ENCODE measurements at regions of chr3 and their contacts with region 1.

Region 1: DNA sequence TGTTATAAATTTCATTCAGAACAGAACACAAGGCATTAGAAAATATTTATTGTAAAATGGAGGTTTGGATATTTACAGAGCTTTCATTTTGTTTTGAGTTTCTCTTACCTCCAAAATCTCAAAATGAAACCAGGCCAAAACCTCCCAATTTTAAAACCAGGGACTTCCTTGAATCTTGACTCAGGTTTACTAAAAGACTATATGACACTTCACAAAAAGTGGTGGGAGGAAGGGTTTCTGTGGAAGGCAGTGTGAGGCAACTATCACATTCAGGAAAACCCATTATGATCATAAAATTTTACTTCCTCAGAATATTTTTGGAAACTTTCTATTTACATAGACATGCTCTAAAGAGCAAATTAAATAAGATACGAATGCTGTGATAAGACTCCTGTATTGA is 205.8 kb upstream of the EOMES start:
- DNase-seq: no peak
- H3K4me3 Mint-ChIP-seq: peak overlapping the region; percentile 62
- H3K27ac Mint-ChIP-seq: peak overlapping the region; percentile 82
- H3K4me1 Mint-ChIP-seq: peaks cover 63% of the 10 kb centered on the region
- H3K27me3 Mint-ChIP-seq: no peaks in the 10 kb centered on the region

Region 2: GRCh38 chr3:27752926-27753325 is 175.0 kb before region 1 on chr3:
- intact Hi-C with region 1: loop called (anchors 1 kb)
- DNase-seq: peak; percentile 17
- H3K4me3 Mint-ChIP-seq: peak overlapping the region; percentile 42
- H3K27ac Mint-ChIP-seq: peak overlapping the region; percentile 96
- H3K4me1 Mint-ChIP-seq: peaks cover 35% of the 10 kb centered on the region
- H3K27me3 Mint-ChIP-seq: no peaks in the 10 kb centered on the region

Region 3: DNA sequence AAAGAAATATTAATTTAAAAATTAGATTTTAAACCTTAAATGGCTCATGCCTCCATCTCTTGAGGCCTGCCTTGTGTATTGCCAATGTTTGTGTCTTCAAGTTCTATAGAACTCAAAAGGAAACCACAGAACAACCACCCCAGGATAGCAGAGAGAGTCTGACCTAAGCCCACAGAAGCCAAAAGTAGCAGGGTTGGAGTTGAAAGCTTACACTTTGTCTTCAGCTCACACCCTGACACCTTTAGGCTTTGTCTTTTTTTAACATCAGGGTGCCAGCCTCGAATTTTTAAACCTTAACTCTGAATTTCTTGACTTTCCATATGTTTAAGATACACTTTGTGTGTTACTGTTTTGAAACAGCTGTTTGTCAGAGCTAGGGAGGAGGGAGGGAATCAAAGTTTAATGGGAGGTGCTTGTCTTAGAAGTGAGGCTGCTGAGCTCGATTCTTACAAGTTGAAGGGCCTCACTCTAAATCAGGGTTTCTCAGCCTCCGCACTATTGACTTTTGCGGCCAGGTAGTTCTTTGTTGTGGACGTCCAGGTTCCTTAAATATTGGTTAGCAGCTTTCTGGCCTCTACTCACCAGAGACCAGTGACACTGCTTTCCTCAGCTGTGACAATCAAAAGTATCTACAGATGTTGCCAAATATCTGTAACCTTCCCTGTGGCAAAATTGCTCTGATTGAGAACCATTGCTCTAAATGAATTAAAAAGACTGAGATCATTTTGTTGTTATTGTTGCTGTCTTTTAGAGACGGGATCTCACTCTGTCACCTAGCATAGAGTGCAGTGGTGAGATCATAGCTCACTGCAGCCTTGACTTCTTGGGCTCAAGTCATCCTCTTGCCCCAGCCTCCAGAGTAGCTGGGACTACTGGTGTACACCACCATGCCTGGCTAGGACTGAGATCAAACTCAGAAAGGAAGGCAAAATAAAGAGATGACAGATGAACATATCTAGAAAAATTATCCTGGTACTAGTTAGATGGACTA is 66.5 kb before region 1 on chr3:
- intact Hi-C with region 1: loop called (anchors 2 kb)
- DNase-seq: peak; percentile 42
- H3K4me3 Mint-ChIP-seq: peak overlapping the region; percentile 47
- H3K27ac Mint-ChIP-seq: peak overlapping the region; percentile 87
- H3K4me1 Mint-ChIP-seq: peaks cover 38% of the 10 kb centered on the region
- H3K27me3 Mint-ChIP-seq: no peaks in the 10 kb centered on the region

Region 4: DNA sequence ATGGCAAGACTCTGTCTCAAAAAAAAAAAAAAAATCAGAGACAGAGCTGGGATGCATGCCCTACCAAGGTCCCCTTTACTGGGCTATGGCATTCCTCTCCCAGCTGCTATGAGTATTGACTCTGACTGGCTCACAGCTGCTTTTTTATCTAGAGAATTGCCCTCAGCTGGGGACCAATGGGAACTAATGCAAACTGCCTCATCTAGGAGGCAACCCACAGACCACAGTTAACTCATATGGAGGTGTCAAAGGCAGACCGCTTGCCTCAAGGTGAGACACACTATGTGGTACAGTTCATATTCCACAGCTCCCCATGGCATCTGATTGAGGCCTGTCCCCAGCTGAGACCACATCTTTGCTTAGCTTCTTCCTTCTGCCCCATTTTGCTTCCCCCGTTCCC is 22.3 kb before region 1 on chr3:
- intact Hi-C with region 1: loop called (anchors 1 kb)
- DNase-seq: peak; percentile 8
- H3K4me3 Mint-ChIP-seq: no peak overlapping the region
- H3K27ac Mint-ChIP-seq: no peak overlapping the region
- H3K4me1 Mint-ChIP-seq: peaks cover 42% of the 10 kb centered on the region
- H3K27me3 Mint-ChIP-seq: no peaks in the 10 kb centered on the region

Region 5: DNA sequence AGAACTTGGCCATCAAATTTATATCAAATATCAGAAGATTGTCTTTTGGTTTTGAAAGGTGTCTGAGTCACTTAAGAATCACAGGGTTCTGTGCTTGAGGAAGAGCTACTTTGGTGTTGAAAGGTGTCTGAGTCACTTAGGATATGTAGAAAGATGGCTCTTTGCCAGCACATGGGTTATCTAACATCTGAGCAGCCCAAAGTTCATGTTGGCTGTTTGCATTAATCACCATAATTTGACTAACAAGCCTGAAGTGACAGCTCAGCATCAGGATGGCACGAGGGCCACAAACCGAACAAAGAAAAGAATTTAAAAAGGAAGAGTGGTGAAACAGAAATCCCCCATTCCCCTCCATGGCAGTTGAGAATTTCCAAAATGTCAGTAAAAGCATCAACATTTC is 123.0 kb after region 1 on chr3:
- intact Hi-C with region 1: loop called (anchors 1 kb)
- DNase-seq: no peak
- H3K4me3 Mint-ChIP-seq: no peak overlapping the region
- H3K27ac Mint-ChIP-seq: peak overlapping the region; percentile 18
- H3K4me1 Mint-ChIP-seq: peaks cover 12% of the 10 kb centered on the region
- H3K27me3 Mint-ChIP-seq: no peaks in the 10 kb centered on the region

Region 6: GRCh38 chr3:28348629-28349483 is 421.0 kb after region 1 on chr3 and contains the starts of genes AZI2 and ZCWPW2:
- intact Hi-C with region 1: loop called (anchors 1 kb)
- DNase-seq: peak; percentile 90
- H3K4me3 Mint-ChIP-seq: peak within 1 kb of the TSS; percentile 98
- H3K27ac Mint-ChIP-seq: peak within 1 kb of the TSS; percentile 98
- H3K4me1 Mint-ChIP-seq: peaks cover 66% of the 10 kb centered on the region
- H3K27me3 Mint-ChIP-seq: no peaks in the 10 kb centered on the region
- total RNA-seq, gene AZI2: 43.7 and 44.8 TPM in 2 replicates
- total RNA-seq, gene ZCWPW2: 0.24 TPM in 1 of 2 replicates, not detected in the other

Measured in activated T-helper 1 cell treated with anti-CD3 and anti-CD28 coated beads, Interleukin-12 subunit alpha, Interleukin-12 subunit beta, Interleukin-2, Interleukin-4 antibody, amounts not matched to agents 30 ng/mL and 10 ng/mL and 1 ng/mL, durations not matched to agents 14 hours and 24 hours and 36 hours (primary cell).